Common myeloid progenitor, CD34-positive (primary cell): ENCODE measurements at regions of chr2 and their contacts with region 1.

Region 1: GRCh38 chr2:219294356-219295351 is 14.5 kb downstream of the PTPRN start:
- DNase-seq: peak; percentile 86 to 88 (median 87)
- H3K4me3 ChIP-seq: peak overlapping the region; percentile 28 to 81 (median 62)
- H3K27ac ChIP-seq: peak overlapping the region; percentile 46 to 80
- H3K4me1 ChIP-seq: peaks cover 0 to 14% (median 14%) of the 10 kb centered on the region in 4 experiments
- H3K27me3 ChIP-seq: peaks cover 0 to 9% (median 5%) of the 10 kb centered on the region in 5 experiments

Region 2: GRCh38 chr2:218995972-218996711 is 298.5 kb before region 1 on chr2:
- CTCF ChIA-PET with region 1: no interaction called
- POLR2A ChIA-PET with region 1: no interaction called
- DNase-seq: peak; percentile 75 to 83 (median 81)
- H3K4me3 ChIP-seq: peak overlapping the region in 3 of 7 experiments; percentile 41 to 54 (median 46)
- H3K27ac ChIP-seq: no peak overlapping the region
- H3K4me1 ChIP-seq: peaks cover 0 to 24% (median 16%) of the 10 kb centered on the region in 4 experiments
- H3K27me3 ChIP-seq: peaks cover 9 to 98% (median 68%) of the 10 kb centered on the region in 5 experiments

Region 3: GRCh38 chr2:219160186-219161017 is 134.3 kb before region 1 on chr2 and contains the start of gene NHEJ1:
- CTCF ChIA-PET with region 1: interaction called, 47 read pairs
- POLR2A ChIA-PET with region 1: no interaction called
- DNase-seq: peak; percentile 90 to 94 (median 94)
- H3K4me3 ChIP-seq: peak within 1 kb of the TSS; percentile 52 to 84 (median 78)
- H3K27ac ChIP-seq: peak within 1 kb of the TSS in 1 of 2 experiments; percentile 73
- H3K4me1 ChIP-seq: peaks cover 0 to 14% (median 13%) of the 10 kb centered on the region in 4 experiments
- H3K27me3 ChIP-seq: no peaks in the 10 kb centered on the region

Region 4: GRCh38 chr2:219245148-219245898 is 49.3 kb before region 1 on chr2 and contains the starts of genes GLB1L and STK16:
- CTCF ChIA-PET with region 1: interaction called, 27 read pairs
- POLR2A ChIA-PET with region 1: interaction called, 3 read pairs
- DNase-seq: peak; percentile 90 to 93 (median 93)
- H3K4me3 ChIP-seq: peak within 1 kb of the TSS; percentile 50 to 96 (median 91)
- H3K27ac ChIP-seq: peak within 1 kb of the TSS; percentile 80 to 94
- H3K4me1 ChIP-seq: peaks cover 48 to 66% (median 62%) of the 10 kb centered on the region in 4 experiments
- H3K27me3 ChIP-seq: no peaks in the 10 kb centered on the region

Region 5: DNA sequence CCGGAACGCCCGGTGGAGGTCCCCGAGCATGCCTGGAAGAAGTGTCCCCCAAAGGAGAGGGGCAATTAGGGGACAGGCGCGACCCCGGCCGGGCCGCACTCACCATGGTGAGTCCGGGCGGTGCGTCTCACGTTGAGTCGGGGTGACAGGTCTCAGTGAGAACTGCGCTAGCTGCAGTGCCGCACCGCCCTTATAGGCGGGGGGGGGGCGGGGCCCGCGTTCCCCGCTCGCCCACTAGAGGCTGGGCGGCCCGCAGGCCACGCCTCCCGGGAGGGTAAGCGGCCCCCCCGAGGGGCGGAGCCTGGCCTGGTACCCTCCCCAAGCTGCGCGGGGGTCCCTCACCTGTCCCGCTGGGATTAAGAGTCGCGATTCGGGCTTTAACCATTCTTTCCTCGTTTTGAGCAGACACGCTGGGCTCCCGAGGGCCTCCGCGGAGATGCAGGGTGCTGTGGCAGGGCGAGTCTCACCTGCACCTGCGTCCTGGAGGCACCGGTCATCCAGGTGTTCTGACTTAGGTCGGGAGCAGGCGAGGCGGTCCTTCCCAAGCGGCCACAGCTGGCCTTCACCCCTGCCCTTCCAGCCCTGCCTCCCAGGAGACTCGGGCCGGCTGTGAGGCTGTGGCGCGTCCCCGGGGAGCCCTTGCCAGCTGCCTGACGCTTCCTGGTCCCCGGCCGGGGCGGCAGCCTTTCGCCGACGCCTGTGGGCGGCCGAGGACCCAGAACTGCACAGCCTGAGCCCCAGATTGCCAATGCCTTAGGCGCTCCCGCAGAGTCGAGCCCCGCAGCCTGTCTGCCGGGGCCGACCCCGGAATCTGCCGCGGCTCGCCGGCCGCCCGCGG is 40.7 kb before region 1 on chr2 and contains the start of gene TUBA4A:
- CTCF ChIA-PET with region 1: interaction called, 27 read pairs
- POLR2A ChIA-PET with region 1: interaction called, 5 read pairs
- DNase-seq: peak; percentile 67 to 84 (median 82)
- H3K4me3 ChIP-seq: peak within 1 kb of the TSS; percentile 51 to 97 (median 75)
- H3K27ac ChIP-seq: peak within 1 kb of the TSS in 1 of 2 experiments; percentile 58
- H3K4me1 ChIP-seq: peaks cover 10 to 59% (median 56%) of the 10 kb centered on the region in 4 experiments
- H3K27me3 ChIP-seq: peaks cover 0 to 10% (median 0%) of the 10 kb centered on the region in 5 experiments

Region 6: DNA sequence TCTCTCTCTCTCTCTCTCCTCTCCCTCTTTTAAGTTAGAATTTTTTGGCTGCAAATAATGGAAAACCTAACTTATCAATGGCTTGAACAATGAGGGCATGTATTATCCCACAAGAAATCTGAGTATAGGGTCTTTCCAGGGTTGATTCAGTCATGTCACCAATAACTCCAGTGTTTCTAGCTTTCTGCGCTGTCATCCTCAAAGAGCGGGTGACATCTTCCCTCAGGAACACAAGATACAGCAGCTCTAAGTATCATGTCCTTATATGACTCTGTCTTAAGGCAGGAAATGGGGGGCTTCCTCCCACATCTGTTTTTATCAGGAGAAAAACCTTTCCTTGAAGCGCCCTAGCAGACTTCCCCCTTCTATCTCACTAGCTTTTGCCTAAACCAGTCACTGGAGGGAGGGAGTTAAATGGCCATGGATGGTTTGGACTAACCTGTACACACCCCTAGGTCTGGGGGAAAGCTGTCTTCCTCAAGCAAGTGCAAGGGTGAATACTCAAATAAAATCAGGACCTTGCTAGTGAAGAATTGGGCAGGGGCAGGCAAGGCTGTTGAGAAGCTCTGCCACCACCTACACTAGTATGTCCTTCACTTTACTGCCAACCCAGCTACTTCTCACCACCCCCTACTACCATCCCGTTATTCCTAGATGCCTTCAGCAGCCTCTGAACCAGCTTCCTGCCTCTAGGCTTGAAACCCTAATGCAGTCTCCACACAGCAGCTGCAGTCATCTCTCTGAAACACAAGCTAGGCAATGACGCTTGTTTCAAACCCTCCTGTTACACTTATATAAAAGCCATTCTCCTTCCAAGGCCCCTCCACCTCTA is 33.4 kb before region 1 on chr2:
- CTCF ChIA-PET with region 1: interaction called, 11 read pairs
- POLR2A ChIA-PET with region 1: no interaction called
- DNase-seq: no peak
- H3K4me3 ChIP-seq: no peak overlapping the region
- H3K27ac ChIP-seq: no peak overlapping the region
- H3K4me1 ChIP-seq: peaks cover 0 to 14% (median 6%) of the 10 kb centered on the region in 4 experiments
- H3K27me3 ChIP-seq: peaks cover 0 to 2% (median 0%) of the 10 kb centered on the region in 5 experiments

Region 7: GRCh38 chr2:219278655-219279516 is 15.8 kb before region 1 on chr2 and contains the start of gene DNAJB2:
- CTCF ChIA-PET with region 1: interaction called, 381 read pairs
- POLR2A ChIA-PET with region 1: interaction called, 12 read pairs
- DNase-seq: peak; percentile 98 to 99 (median 99)
- H3K4me3 ChIP-seq: peak within 1 kb of the TSS; percentile 22 to 77 (median 65)
- H3K27ac ChIP-seq: peak within 1 kb of the TSS; percentile 68 to 84
- H3K4me1 ChIP-seq: peaks cover 8 to 32% (median 28%) of the 10 kb centered on the region in 4 experiments
- H3K27me3 ChIP-seq: peaks cover 0 to 3% (median 0%) of the 10 kb centered on the region in 5 experiments

Region 8: DNA sequence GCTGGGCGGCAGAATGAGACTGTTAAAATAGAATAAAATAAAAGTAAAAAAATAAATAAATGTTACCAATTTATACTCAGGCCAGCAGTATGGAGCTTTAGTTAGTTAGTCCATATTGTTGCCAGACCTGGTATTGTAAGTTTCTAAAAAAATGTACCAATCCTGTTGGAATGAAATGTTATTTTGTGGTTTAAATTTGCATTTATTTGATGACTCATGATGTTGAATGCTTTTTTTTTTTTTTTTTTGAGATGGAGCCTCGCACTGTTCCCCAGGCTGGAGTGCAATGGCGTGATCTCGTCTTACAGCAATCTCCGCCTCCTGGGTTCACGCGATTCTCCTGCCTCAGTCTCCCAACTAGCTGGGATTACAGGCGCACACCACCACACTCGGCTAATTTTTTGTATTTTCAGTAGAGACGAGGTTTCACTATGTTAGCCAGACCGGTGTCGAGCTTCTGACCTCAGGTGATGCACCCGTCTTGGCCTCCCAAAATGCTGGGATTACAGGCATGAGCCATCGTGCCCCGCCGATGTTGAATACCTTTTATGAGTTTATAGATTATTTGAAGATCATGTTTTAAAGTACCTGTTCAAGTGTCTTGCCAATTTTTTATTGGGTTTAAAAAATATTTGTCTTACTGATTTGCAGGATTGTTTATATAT is 20.3 kb after region 1 on chr2:
- CTCF ChIA-PET with region 1: interaction called, 16 read pairs
- POLR2A ChIA-PET with region 1: interaction called, 3 read pairs
- DNase-seq: no peak
- H3K4me3 ChIP-seq: no peak overlapping the region
- H3K27ac ChIP-seq: no peak overlapping the region
- H3K4me1 ChIP-seq: no peaks in the 10 kb centered on the region
- H3K27me3 ChIP-seq: peaks cover 6 to 33% (median 9%) of the 10 kb centered on the region in 5 experiments

Region 9: GRCh38 chr2:219552382-219553167 is 257.9 kb after region 1 on chr2:
- CTCF ChIA-PET with region 1: no interaction called
- POLR2A ChIA-PET with region 1: no interaction called
- DNase-seq: peak; percentile 73 to 91 (median 85)
- H3K4me3 ChIP-seq: peak overlapping the region; percentile 43 to 77 (median 63)
- H3K27ac ChIP-seq: no peak overlapping the region
- H3K4me1 ChIP-seq: peaks cover 0 to 20% (median 16%) of the 10 kb centered on the region in 4 experiments
- H3K27me3 ChIP-seq: peaks cover 3 to 34% (median 16%) of the 10 kb centered on the region in 5 experiments